GM13976 (cell line): ENCODE measurements at regions of chr19 and their contacts with region 1.

Region 1: GRCh38 chr19:4576016-4576933 is 16.8 kb upstream of the SEMA6B start:
- DNase-seq: peak; percentile 85
- CTCF ChIP-seq: peak; percentile 44

Region 2: DNA sequence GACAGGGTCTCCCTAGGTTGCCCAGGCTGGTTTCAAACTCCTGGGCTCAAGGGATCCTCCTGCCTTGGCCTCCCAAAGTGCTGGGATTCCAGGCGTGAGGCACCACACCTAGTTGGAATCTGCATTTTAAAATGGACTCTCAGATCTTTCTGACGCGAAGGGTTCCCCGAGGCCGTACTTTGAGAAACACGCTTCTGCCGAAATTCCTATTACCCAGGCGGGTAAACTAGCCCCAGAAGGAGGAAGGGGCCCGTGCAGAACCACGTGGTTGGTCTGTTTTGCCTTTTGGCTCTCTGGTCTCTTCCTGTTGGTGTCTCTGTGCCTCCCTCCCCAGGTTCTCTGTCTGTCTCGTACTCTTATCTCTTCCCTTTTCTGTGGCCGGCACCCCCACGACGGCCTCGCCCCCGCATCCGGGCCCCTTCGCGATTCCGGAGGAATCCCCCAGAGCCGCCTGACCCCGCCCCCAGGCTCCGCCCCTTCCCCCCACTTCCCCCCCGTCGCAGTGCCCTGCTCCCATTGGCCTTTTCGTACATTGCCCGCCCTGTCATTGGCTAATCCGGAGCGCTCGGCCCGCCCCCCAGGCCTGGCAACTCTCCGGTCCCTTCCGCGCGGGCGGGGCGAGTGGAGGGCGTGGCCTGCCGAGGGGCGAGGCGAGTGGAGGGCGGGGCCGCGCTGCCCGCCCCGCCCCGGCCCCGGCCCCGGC is 62.7 kb after region 1 on chr19 and contains the start of gene TNFAIP8L1:
- in situ Hi-C with region 1: loop called (anchors 10 kb)
- DNase-seq: peak; percentile 100
- CTCF ChIP-seq: no peak

Region 3: DNA sequence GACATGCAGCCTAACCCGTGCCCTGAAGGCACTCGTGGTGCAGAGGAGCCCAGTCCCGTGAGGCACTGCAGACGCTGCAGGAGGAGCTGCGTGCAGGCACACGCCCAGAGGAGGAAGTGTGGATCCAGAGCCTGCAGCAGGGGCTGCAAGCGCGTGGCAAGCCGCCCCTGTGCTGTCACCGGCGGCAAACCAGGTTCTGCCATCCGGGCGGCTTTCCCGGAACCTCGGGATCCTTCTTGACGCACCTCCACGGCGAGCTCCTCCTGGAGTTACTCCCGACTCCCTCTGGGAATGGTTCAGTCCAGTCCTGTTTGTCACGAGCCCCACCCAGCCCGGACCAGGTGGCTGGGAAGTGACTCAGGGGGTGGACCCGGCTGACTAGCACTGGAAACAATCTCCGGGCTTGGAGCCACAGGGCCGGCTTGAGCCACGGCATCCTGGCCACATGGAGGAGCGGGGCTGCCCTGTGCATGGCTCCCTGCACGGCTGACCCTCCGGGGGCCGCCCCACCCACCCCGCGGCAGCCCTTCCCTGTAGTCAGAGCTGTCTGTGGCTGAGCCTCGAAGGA is 137.2 kb after region 1 on chr19:
- in situ Hi-C with region 1: no loop called
- DNase-seq: no peak
- CTCF ChIP-seq: no peak